ENCODE measurements at regions of chr20 and their contacts with region 1.

Region 1: DNA sequence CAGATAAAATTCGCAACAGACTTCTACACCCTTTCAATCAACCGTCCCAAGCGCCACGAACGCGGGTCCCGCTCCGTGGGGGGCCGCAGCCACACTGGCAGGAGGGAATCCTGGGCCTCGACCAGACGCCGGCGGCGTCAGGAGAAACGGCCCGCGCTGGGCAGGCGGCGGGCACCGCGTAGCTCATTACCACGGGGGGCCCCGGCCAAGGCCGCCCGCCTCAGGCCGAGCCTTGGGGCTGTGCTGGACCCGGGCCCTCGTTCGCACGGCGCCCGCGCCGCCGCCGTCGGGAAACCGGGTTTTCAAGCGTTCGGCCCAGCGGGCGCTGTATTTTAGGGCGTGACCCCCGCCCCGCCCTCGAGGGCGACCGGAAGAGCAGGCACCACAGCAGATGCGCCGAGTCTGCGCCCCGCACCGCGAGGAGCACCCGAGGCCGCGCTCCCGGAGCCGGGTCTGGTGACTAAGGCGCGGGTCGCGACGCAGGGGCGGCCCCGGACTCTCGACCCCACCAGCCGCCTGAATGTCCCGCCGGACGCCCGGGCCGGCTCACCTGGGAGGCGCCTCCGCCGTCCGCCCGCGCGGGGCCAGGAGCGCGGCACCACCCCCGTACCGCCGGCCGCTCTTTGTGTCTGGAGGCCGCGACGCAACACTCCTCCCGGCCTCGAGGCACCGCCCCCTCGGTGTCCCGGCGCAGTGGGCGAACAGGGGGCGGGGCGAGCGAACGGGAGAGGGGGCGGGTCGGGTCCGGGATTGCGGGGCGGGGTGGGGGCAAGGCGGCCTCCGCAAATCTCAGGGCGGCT is at the start of gene NINL:
- DNase-seq: peak; percentile 74 to 86 (median 83)
- H3K4me3 ChIP-seq: peak within 1 kb of the TSS; percentile 53
- H3K27ac ChIP-seq: peak within 1 kb of the TSS; percentile 42 to 73
- H3K4me1 ChIP-seq: peaks cover 4% of the 10 kb centered on the region
- H3K27me3 ChIP-seq: no peaks in the 10 kb centered on the region
- CTCF ChIP-seq: no peak
- EP300 ChIP-seq: no peak
- POLR2A ChIP-seq: peak; percentile 59
- total RNA-seq, gene NINL: 10.1 to 33.3 (median 20.7) TPM

Region 2: DNA sequence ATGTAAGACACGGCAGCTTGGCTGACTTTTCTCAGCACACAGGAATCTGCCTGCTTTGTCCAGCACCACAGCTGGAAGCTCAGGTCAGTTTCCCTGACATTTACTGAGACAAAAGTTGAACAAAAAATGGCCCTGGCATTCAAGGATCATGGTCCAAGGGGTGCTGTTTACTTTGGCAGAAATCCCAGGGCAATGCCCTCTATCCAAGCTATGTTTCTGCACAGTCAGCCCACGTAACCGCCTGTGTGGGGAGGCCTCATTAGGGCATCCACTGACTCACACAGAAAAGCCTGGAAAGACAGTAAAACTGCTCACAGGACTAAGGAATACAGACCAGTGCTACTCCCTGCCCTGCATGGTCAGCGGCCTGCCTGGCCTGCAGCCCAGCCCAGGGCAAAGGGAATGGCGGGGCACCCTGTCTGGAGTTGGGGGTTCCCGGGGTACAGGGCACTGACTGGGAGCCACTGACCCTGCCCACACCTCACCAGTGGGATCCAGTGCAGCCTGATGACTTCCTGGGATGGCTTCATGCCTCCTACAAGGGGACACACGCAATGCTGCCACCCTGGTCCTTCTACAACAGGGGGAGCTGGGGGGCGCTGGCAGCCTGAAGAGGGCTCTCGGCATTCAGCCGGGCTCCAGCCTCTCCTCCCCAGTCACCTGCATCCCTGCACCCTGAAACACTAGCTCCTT is 76.9 kb before region 1 on chr20:
- intact Hi-C with region 1: loop called in 1 of 4 experiments (anchors 10 kb)
- DNase-seq: peak; percentile 45 to 75 (median 70)
- H3K4me3 ChIP-seq: no peak overlapping the region
- H3K27ac ChIP-seq: peak overlapping the region; percentile 18 to 52
- H3K4me1 ChIP-seq: peaks cover 6% of the 10 kb centered on the region
- H3K27me3 ChIP-seq: no peaks in the 10 kb centered on the region
- CTCF ChIP-seq: no peak
- EP300 ChIP-seq: no peak
- POLR2A ChIP-seq: no peak

Region 3: GRCh38 chr20:25539742-25540672 is 45.1 kb before region 1 on chr20:
- intact Hi-C with region 1: loop called in 1 of 4 experiments (anchors 10 kb)
- DNase-seq: no peak
- H3K4me3 ChIP-seq: peak overlapping the region; percentile 24
- H3K27ac ChIP-seq: peak overlapping the region in 1 of 2 donors; percentile 8
- H3K4me1 ChIP-seq: peaks cover 17% of the 10 kb centered on the region
- H3K27me3 ChIP-seq: no peaks in the 10 kb centered on the region
- CTCF ChIP-seq: peak; percentile 14 to 40 (median 21)
- EP300 ChIP-seq: no peak
- POLR2A ChIP-seq: no peak

Region 4: DNA sequence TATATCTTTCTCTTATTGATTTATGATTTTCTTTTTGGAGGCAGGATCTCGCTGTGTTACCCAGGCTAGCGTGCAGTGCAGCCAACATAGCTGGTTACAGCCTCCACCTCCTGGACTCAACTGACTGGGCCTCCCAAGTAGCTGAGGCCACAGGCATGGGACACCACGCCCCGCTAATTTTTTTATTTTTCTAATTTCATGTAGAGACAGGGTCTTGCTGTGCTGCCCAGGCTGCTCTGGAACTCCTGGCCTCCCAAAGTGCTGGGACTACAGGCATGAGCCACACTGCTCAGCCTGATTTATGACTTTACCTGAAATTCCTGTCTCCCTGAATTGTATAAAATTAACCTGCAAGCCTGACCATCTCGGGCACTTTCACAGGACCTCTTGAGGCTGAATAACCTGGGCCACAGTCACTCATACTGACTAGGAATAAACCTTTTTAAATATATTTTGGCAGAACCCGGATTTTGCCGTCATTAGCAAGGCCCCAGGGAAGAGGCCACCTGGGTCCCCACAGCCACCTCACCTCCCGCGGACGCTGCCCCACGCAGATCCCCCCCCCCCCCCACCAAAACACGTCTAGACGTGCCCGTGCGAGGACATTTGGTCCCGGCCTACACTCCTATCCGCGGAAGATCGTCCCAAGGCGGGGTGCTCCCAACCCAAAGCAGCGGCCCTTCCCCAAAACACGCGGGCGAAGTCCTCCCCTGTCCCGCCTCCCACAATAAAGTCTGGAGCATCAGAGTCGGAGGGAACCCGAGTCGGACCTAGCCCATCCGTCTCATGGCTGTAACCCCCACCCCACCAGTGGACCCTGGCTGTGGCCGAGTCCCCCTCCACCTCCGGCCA is 110.7 kb after region 1 on chr20:
- intact Hi-C with region 1: no loop called
- DNase-seq: peak in 1 of 5 donors; percentile 65
- H3K4me3 ChIP-seq: peak overlapping the region; percentile 54
- H3K27ac ChIP-seq: peak overlapping the region; percentile 85 to 94
- H3K4me1 ChIP-seq: no peaks in the 10 kb centered on the region
- H3K27me3 ChIP-seq: no peaks in the 10 kb centered on the region
- CTCF ChIP-seq: no peak
- EP300 ChIP-seq: no peak
- POLR2A ChIP-seq: no peak

Measured in ovary (tissue), 10 donors.